ENCODE measurements at regions of chr4 and their contacts with region 1.

Region 1: DNA sequence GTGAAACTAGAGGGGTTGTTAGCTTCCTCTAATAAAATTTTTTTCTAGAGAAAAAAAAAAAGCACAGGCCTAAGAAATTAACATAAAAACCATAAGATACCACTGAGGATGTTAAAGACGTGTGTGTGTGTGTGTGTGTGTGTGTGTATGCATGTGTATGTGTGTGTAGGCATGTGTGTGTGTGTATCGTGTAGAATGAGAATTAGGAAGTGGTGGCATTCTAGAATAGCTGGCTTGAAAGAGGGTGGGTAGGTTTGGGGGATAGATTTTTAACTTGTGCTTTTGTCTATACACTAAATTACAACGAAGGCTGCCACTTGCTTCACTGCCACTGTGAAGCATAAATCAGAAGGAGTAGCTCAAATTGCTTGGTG is 22.5 kb upstream of the AFM start:
- DNase-seq: no peak
- ATAC-seq: no peak
- H3K4me3 ChIP-seq: no peak overlapping the region
- H3K27ac ChIP-seq: no peak overlapping the region
- H3K4me1 ChIP-seq: no peaks in the 10 kb centered on the region
- H3K27me3 ChIP-seq: no peaks in the 10 kb centered on the region; the same call in 1 of the 2 replicates
- CTCF ChIP-seq: no peak
- POLR2A ChIP-seq: no peak
- RAD21 ChIP-seq: no peak

Region 2: DNA sequence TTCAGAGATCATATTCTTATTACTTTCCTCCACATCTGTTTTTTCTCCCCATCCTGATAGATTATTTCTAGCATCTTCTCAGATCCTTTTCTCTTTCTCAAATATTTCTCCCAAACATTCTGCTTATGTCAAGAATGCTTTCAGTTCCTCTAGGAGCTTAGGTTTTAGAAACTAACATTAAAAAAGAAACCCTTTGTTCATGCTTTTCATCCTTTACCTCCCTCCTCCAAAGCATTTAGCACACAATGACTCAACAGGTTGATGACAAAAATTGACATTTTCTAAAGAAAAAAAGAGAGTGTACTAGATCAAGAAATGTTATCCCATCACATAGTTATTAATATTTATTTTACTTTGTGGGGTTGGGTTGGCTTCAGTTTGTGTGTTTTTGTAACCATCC is 71.5 kb before region 1 on chr4:
- CTCF ChIA-PET with region 1: no interaction called
- POLR2A ChIA-PET with region 1: no interaction called
- dilution Hi-C with region 1: no loop called
- in situ Hi-C with region 1: no loop called
- intact Hi-C with region 1: no loop called
- DNase-seq: no peak
- ATAC-seq: no peak
- H3K4me3 ChIP-seq: no peak overlapping the region
- H3K27ac ChIP-seq: no peak overlapping the region
- H3K4me1 ChIP-seq: no peaks in the 10 kb centered on the region
- H3K27me3 ChIP-seq: no peaks in the 10 kb centered on the region
- CTCF ChIP-seq: no peak
- POLR2A ChIP-seq: no peak
- RAD21 ChIP-seq: no peak

Region 3: DNA sequence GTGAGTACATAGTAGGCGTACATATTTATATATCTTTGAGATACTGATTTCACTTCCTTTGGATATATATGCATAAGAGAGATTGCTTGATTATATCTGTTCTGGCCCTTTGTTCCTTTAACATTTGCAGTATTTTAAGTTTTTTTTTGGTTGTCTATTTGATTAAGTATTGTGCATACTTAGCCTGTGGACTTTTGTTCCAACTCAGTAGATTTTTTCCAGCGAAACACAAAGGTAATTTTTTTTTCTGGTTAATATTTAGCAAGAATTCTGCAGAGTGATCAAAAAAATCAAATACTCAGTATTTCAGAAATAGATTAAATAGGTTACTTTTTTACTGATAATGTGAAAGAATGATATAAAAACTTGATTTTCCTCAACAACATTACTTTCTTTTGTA is 22.3 kb after region 1 on chr4 and contains the start of gene AFM:
- CTCF ChIA-PET with region 1: no interaction called
- POLR2A ChIA-PET with region 1: no interaction called
- dilution Hi-C with region 1: no loop called
- in situ Hi-C with region 1: no loop called
- intact Hi-C with region 1: loop called (anchors 2 kb)
- DNase-seq: no peak
- ATAC-seq: no peak
- H3K4me3 ChIP-seq: no peak within 1 kb of the TSS
- H3K27ac ChIP-seq: no peak within 1 kb of the TSS
- H3K4me1 ChIP-seq: no peaks in the 10 kb centered on the region
- H3K27me3 ChIP-seq: peaks cover 2% of the 10 kb centered on the region
- CTCF ChIP-seq: no peak
- POLR2A ChIP-seq: no peak
- RAD21 ChIP-seq: no peak
- total RNA-seq, gene AFM: not detected in 2 replicates

Measured in IMR-90 (cell line).